Posterior vena cava (tissue), 2 donors: ENCODE measurements at regions of chr10 and their contacts with region 1.

Region 1: DNA sequence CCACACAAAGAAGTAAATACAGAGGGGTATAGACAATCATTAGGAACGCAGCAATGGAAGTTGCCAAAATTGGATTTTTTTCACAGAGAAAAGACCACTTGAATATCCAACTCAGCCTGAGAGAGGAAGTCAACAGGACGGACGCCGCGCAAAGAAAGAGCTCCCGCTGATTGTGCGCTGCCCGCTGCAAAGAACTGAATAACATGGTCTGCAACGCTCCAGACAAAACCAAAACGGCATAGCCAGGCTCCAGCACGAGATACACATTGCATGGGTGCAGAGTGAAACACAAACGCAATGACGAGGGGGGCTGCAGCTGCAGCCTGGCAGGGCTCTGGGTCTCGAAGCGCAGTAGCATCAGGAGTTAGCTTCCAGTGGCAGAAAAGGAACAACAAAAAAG is 113.9 kb upstream of the MGMT start:
- DNase-seq: no peak

Region 2: DNA sequence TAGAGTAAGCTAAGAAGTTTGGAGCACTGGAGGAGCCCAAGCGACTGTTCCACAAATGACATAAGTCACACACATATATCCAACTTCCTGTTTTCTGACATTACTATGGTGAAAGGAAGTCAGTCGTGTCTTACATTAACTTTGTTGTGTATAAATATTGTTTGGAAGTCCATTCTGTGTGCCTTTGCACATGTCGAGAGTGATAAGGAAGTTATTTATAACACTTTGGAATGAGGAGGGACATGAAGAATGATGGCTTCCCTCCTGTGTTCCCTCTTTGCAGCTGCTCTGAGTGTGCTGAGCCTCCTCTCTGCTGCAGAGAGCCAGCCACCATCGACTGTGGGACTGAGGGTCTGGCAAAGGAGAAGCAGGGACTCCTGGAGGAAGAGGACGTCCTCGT is 73.5 kb after region 1 on chr10:
- intact Hi-C with region 1: loop called in 1 of 2 experiments (anchors 2 kb)
- DNase-seq: no peak

Region 3: DNA sequence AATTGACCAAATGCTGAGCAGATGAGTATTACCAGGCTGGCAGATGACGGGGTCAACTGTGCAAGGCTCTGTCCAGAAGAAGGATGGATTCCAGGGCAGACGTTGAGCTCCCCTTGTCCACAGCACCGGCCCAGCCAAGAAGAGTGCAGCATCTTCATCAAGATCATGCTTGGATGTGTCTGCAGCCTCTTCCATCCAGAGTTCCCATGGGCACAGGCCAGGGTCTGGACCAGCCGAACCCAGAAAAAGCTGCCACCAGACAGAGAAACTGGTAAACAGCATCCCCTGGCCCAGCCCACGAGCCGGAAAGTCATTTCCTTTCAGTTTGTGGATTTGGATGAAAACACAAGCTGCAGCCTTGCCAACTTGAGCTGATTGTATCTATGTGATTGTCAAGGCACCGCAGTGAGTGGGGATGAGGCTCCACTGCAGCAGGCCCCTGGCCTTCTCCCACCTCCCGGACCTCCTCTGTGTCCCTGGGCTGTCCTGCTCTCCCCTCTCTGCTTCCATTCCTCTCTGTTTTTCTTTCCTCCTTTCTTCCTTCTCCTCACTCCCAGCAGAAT is 1636.7 kb after region 1 on chr10:
- intact Hi-C with region 1: loop called in 1 of 2 experiments (anchors 10 kb)
- DNase-seq: no peak